ENCODE measurements at regions of chr12 and their contacts with region 1.

Region 1: DNA sequence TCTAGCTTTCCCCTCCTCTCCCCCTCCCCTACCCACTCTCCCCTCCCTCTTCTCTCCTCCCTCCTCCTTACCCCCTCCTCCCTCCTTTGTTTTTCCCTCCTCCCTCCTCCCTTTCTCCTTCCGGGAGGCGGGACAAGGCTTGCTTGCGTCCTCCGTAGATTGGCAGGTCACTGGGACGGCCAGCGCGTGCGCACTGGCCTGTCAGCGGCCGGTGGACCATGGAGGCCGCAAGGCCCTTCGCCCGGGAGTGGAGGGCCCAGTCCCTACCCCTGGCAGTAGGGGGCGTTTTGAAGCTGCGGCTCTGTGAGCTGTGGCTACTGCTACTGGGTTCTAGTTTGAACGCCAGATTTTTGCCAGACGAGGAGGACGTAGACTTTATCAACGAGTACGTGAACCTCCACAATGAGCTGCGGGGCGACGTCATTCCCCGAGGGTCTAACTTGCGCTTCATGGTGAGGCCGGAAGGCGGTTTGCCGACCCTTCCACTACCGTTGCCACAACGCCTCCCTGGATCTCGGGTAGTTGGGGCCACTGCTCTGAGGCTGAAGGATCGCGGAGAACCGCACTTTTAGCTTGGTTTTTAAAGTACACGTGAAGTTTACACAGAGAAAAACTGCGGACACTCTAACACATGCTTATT is at the start of gene GLIPR1L2:
- DNase-seq: peak; percentile 93
- H3K4me3 Mint-ChIP-seq: peak within 1 kb of the TSS; percentile 87
- H3K27ac Mint-ChIP-seq: peak within 1 kb of the TSS; percentile 89
- H3K4me1 Mint-ChIP-seq: peaks cover 27% of the 10 kb centered on the region
- H3K27me3 Mint-ChIP-seq: no peaks in the 10 kb centered on the region
- total RNA-seq, gene GLIPR1L2: 0.33 to 0.35 TPM

Region 2: DNA sequence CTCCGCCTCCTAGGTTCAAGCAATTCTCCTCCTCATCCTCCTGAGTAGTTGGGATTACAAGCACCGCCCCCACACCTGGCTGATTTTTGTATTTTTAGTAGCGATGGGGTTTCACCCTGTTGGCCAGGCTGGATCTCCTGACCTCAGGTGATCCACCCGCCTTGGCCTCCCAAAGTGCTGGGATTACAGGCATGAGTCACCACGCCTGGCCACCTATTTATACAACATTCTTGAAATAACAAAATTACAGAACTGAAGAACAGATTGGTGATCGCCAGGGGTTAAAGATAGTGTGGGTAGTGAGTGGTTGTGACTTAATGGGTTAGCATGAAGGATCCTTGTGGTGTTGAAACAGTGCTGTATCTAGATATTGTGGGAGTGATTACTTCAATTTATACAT is 49.2 kb before region 1 on chr12:
- CTCF ChIA-PET with region 1: interaction called, 4 read pairs
- intact Hi-C with region 1: loop called (anchors 1 kb)
- DNase-seq: no peak
- H3K4me3 Mint-ChIP-seq: no peak overlapping the region
- H3K27ac Mint-ChIP-seq: no peak overlapping the region
- H3K4me1 Mint-ChIP-seq: peaks cover 10% of the 10 kb centered on the region
- H3K27me3 Mint-ChIP-seq: peaks cover 14% of the 10 kb centered on the region

Region 3: DNA sequence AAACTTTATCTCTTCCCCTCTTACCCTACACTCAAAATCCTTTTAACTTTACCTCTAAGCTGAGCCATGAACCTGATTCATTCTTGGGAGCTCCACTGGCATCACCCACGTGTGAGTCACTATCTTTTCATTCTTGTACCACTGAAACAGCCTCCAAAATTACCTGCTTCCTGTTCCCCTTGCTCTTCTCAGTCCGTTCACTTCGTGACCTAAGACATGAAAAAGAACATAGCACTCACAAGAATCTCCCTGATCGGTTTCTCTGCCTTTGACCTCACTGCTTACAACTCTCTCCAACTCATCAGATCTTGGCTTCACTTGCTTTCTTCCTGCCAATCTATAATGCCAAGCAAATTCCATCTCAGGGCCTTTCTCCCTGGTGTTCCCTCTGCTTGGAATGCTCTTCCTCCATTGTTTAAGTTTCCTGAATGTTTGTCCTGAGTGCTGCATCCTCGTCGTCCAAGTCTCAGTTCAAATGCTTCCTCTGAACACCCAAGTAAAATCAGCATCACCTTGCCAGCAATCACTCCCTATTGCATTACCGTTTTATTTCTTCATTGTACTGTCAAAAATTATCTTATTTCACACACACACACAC is 98.7 kb after region 1 on chr12:
- CTCF ChIA-PET with region 1: interaction called, 4 read pairs
- intact Hi-C with region 1: loop called (anchors 1 kb)
- DNase-seq: peak; percentile 62
- H3K4me3 Mint-ChIP-seq: no peak overlapping the region
- H3K27ac Mint-ChIP-seq: peak overlapping the region; percentile 25
- H3K4me1 Mint-ChIP-seq: peaks cover 19% of the 10 kb centered on the region
- H3K27me3 Mint-ChIP-seq: no peaks in the 10 kb centered on the region

Region 4: DNA sequence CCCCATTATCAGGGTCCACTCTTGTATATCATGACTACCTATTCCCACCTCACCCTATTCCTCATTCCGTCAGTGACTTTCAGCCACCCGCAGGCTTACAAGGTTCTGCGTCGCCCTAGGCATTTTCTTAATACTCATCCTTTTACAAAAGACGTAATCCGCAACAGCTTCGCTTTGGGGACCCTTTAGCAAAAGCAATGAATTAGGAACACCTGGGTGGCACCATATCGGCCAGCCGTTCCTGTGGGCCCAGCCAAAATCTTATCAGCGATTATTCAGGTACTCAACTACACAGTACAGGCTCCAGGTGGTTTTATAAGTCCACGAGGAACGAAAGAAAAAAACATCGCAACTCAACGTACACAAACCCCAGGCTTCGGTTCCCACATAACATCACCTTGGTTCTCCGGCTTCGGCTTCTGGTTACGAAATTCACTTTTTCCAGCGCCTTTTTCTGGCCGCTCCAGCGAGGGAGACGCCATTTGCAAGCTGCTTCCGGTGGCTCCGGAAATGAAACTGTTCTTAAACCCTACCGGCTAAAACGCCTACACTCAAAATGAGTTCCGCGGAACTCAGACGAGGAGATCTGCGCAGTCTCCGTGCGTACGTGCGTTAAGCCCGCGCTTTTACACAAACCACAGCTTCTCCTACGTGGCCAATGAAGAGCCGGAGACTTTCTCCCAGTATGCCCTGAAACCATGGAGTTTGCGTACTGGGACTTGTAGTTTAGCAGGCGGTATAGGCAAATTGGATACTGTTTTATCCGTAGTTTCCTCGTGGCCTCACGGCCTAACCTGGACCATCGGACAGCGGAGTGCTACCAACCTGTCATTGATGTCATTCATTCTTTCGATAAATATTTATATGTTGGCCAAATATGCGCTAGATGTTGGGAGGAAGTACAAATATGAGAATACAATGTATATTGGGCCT is 120.4 kb after region 1 on chr12 and contains the start of gene KRR1:
- CTCF ChIA-PET with region 1: interaction called, 3 read pairs
- intact Hi-C with region 1: loop called (anchors 1 kb)
- DNase-seq: peak; percentile 95
- H3K4me3 Mint-ChIP-seq: peak within 1 kb of the TSS; percentile 95
- H3K27ac Mint-ChIP-seq: peak within 1 kb of the TSS; percentile 98
- H3K4me1 Mint-ChIP-seq: peaks cover 29% of the 10 kb centered on the region
- H3K27me3 Mint-ChIP-seq: no peaks in the 10 kb centered on the region
- total RNA-seq, gene KRR1: 81.1 to 83.9 TPM